Posterior vena cava (tissue), 2 donors: ENCODE measurements at regions of chr22 and their contacts with region 1.

Region 1: DNA sequence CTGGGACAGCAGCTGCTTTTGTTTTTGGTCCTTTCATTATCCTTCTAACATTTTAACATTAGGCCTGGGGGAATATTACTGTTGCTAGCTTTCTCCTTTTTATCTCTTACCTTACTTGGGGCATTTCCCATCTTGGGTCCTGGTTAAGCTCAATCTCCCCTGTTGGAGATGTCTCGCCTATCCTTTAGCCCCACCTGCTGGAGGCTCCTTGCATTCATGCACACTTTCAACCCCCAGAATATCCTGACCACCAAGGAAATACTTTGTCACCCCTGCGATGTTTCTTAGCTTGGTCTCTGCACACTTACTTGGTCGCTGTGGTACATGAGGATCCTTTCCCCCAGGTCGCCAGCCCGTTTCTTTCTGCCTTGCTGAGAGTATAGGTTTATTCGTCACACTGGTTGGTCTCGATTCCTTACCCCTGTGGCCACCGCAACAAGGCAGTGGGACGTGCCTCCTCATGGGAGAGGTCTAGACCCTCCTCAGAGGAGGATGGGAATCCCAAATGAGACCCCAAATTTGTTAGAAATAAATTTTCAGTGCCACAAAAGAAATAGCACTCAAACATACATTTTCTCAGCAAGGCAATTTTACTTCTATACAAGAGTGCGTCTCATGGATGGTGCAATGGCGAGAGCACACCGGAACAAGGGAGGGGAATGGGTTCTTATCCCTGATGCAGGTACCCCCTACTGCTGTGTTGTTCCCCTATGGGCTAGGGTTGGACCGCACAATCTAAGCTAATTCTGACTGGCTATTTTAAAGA is 5.4 kb upstream of the TXN2 start:
- DNase-seq: no peak

Region 2: GRCh38 chr22:35510481-35510934 is 976.3 kb before region 1 on chr22:
- intact Hi-C with region 1: loop called in 1 of 2 experiments (anchors 5 kb)
- DNase-seq: no peak